ENCODE measurements at regions of chr4 and their contacts with region 1.

Region 1: GRCh38 chr4:38154681-38155608 is 194.7 kb downstream of the PTTG2 start:
- DNase-seq: peak; percentile 46 to 69 (median 48)
- H3K4me3 ChIP-seq: peak overlapping the region in 1 of 3 experiments; percentile 22
- H3K4me3 Mint-ChIP-seq: peak overlapping the region in 1 of 2 donors; percentile 46
- H3K27ac ChIP-seq: peak overlapping the region; percentile 42 to 62
- H3K27ac Mint-ChIP-seq: peak overlapping the region; percentile 68 to 90 (median 83)
- H3K4me1 ChIP-seq: peaks cover 60 to 62% of the 10 kb centered on the region in 2 donors
- H3K4me1 Mint-ChIP-seq: peaks cover 65% of the 10 kb centered on the region
- H3K27me3 ChIP-seq: no peaks in the 10 kb centered on the region
- H3K27me3 Mint-ChIP-seq: peaks cover 2 to 7% (median 5%) of the 10 kb centered on the region in 3 donors
- CTCF ChIP-seq: no peak

Region 2: DNA sequence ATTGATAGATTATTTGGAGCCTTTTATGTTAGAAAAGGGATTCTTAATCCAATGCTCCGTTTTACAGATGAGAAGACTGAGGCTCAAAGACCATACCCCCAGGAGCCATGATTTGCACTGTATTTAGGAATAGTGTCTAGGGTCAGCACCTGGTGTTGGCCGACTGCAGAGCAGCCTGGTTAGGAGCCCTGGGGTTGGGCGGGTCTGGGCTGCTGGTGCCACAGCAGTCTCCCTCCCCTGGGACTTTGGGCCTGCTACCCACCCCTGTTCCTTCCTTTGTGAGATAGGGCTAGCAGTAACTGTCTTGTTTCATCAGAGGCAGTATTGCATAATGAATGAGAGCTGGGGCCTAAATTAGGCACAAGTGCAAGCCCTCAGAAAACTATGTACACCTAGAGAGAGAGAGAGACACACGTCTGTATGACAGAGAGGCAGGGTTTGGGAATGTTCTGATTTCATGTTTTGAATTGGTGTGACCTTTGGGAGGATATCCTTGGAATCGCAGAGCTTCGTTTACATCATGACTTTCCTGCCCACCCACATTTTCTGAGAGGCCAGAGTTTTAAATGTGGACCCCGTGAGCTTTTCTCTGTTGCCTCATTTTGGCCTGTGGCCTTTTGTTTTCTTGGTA is 83.0 kb before region 1 on chr4:
- intact Hi-C with region 1: loop called (anchors 5 kb)
- DNase-seq: peak; percentile 63 to 78 (median 77)
- H3K4me3 ChIP-seq: peak overlapping the region in 1 of 3 experiments; percentile 13
- H3K4me3 Mint-ChIP-seq: peak overlapping the region in 1 of 2 donors; percentile 1
- H3K27ac ChIP-seq: peak overlapping the region; percentile 69 to 96
- H3K27ac Mint-ChIP-seq: peak overlapping the region; percentile 87 to 99 (median 95)
- H3K4me1 ChIP-seq: peaks cover 78 to 87% of the 10 kb centered on the region in 2 donors
- H3K4me1 Mint-ChIP-seq: peaks cover 88% of the 10 kb centered on the region
- H3K27me3 ChIP-seq: no peaks in the 10 kb centered on the region
- H3K27me3 Mint-ChIP-seq: no peaks in the 10 kb centered on the region
- CTCF ChIP-seq: no peak

Measured in CD14-positive monocyte (primary cell).